Mammary epithelial cell (primary cell): ENCODE measurements at regions of chr22 and their contacts with region 1.

Region 1: DNA sequence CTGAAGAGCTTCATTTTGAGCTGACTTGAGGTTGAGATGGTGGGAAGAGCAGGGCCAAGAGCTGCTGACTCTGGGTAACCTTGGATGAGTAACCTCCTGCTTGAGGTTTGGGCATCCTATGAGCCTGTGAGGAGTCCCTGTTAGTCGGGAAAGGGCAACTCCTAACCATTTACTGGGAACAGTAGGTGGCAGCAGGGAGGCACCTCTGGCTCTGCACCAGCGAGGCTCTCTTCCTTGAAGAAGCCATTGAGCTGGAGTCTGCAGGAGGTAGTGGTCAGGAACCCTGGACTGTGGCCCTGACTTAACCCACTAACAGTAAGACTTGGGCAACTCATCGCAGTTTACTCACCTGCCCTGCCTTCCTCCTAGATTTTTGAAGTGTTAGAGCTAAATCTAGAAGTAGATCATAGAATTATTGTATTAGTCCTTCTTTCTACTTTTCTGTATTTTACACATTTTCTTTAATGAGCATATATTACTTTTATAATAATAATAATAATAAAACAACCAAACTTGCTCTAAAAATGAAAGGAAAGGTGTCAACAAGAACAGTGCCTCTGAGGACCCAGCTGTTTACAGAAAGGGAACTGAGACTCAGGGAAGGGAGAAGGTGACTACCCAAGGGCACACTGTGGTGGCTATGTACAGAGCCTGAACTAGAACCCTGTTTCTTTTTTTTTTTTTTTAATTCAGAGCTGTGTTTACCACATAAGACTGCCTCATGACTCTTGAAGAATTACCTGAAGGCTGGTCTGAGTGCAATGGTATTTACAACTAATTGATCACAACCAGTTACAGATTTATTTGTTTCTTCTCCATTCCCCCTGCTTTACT is 47.5 kb downstream of the MEI1 start:
- DNase-seq: peak; percentile 85
- H3K4me3 ChIP-seq: no peak overlapping the region
- H3K27ac ChIP-seq: no peak overlapping the region
- H3K4me1 ChIP-seq: no peaks in the 10 kb centered on the region
- H3K27me3 ChIP-seq: no peaks in the 10 kb centered on the region
- CTCF ChIP-seq: peak; percentile 78 to 92

Region 2: DNA sequence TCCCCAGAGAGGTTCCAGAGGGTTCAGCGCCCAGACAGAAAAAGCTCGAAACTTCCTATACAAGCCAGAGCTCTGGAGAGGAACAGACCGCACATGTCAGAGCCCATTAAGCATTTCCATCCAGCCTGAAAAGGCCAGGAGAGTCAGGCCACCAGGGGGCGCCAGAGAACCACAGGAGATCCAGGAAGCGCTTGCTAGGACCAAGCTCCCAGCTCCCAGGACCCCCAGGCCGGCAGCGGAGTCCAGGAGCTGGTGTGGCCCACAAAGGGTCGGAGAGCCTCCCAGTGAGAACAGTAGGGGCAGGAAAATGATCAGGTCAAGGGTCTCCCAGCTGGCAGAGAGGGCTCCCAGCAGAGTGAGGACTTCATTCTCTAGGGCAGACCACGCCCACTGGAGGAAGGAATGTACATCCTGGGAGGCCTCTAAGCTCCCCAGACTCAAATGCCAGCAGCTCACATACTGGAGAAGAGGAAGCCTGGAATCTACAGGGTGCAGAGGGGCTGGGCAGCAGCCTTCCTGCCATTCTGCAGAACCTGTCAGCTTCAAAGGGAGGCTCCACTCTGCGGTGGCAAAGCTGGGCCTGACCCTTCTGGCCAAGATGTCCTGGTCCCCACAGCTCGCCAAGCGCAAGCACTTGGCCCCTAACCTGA is 49.5 kb before region 1 on chr22:
- CTCF ChIA-PET with region 1: interaction called, 4 read pairs
- dilution Hi-C with region 1: no loop called
- in situ Hi-C with region 1: no loop called
- intact Hi-C with region 1: loop called (anchors 2 kb)
- DNase-seq: peak; percentile 64
- H3K4me3 ChIP-seq: peak overlapping the region in 1 of 3 experiments; percentile 28
- H3K27ac ChIP-seq: no peak overlapping the region
- H3K4me1 ChIP-seq: peaks cover 17% of the 10 kb centered on the region
- H3K27me3 ChIP-seq: no peaks in the 10 kb centered on the region
- CTCF ChIP-seq: peak; percentile 88 to 98

Region 3: DNA sequence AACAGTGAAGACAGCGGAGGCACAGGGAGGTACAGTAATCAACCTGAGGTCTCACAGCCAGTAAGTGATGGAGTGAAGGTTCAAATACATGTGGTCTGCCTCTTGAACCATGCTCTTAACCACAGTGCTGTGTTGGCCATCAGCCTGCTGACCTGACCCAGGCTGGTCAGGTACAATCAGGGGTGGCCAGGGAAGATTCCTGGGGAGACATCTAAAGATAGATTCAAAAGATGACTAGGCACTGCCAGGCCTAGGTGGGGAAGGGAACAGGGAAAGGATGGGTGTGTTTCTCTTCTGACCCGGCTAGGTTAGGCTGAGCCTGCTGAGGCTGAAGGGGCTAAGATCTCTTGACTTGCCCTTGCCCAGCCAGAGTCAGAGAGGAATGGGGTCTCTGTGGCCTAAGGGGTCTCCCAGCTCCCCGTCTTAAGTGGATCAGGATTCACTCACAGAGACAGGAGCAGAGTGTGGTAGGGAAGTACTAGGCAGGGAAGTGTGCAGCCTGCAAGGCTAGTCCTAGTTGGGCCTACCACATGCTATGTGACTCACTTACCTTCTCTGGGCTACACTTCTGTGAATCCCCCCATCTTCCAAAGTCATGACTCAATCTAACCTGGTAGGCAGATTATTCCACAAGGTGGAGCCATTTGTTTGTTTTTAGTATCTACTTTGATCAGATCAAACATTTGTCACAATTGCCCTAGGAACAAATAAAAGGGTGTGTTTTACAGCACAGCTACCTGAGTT is 75.7 kb after region 1 on chr22:
- CTCF ChIA-PET with region 1: no interaction called
- dilution Hi-C with region 1: loop called (anchors 5 kb)
- in situ Hi-C with region 1: no loop called
- intact Hi-C with region 1: loop called (anchors 2 kb)
- DNase-seq: peak; percentile 86
- H3K4me3 ChIP-seq: no peak overlapping the region
- H3K27ac ChIP-seq: no peak overlapping the region
- H3K4me1 ChIP-seq: peaks cover 9% of the 10 kb centered on the region
- H3K27me3 ChIP-seq: no peaks in the 10 kb centered on the region
- CTCF ChIP-seq: peak; percentile 58 to 63

Region 4: GRCh38 chr22:41883400-41883799 is 136.6 kb after region 1 on chr22:
- CTCF ChIA-PET with region 1: no interaction called
- dilution Hi-C with region 1: loop called (anchors 5 kb)
- in situ Hi-C with region 1: no loop called
- intact Hi-C with region 1: no loop called
- DNase-seq: no peak
- H3K4me3 ChIP-seq: no peak overlapping the region
- H3K27ac ChIP-seq: no peak overlapping the region
- H3K4me1 ChIP-seq: no peaks in the 10 kb centered on the region
- H3K27me3 ChIP-seq: no peaks in the 10 kb centered on the region
- CTCF ChIP-seq: no peak

Region 5: GRCh38 chr22:41931701-41932269 is 185.0 kb after region 1 on chr22:
- CTCF ChIA-PET with region 1: no interaction called
- dilution Hi-C with region 1: loop called (anchors 5 kb)
- in situ Hi-C with region 1: no loop called
- intact Hi-C with region 1: loop called (anchors 5 kb)
- DNase-seq: no peak
- H3K4me3 ChIP-seq: no peak overlapping the region
- H3K27ac ChIP-seq: no peak overlapping the region
- H3K4me1 ChIP-seq: no peaks in the 10 kb centered on the region
- H3K27me3 ChIP-seq: no peaks in the 10 kb centered on the region
- CTCF ChIP-seq: no peak

Region 6: GRCh38 chr22:42553475-42554361 is 806.9 kb after region 1 on chr22 and contains the start of gene SERHL2:
- CTCF ChIA-PET with region 1: no interaction called
- dilution Hi-C with region 1: no loop called
- in situ Hi-C with region 1: no loop called
- intact Hi-C with region 1: loop called (anchors 2 kb)
- DNase-seq: peak; percentile 47
- H3K4me3 ChIP-seq: peak within 1 kb of the TSS; percentile 17 to 53 (median 48)
- H3K27ac ChIP-seq: no peak within 1 kb of the TSS
- H3K4me1 ChIP-seq: peaks cover 3% of the 10 kb centered on the region
- H3K27me3 ChIP-seq: no peaks in the 10 kb centered on the region
- CTCF ChIP-seq: no peak
- total RNA-seq, gene SERHL2: 1.7 to 2.3 TPM